AG04450 (cell line): ENCODE measurements at regions of chr14 and their contacts with region 1.

Region 1: DNA sequence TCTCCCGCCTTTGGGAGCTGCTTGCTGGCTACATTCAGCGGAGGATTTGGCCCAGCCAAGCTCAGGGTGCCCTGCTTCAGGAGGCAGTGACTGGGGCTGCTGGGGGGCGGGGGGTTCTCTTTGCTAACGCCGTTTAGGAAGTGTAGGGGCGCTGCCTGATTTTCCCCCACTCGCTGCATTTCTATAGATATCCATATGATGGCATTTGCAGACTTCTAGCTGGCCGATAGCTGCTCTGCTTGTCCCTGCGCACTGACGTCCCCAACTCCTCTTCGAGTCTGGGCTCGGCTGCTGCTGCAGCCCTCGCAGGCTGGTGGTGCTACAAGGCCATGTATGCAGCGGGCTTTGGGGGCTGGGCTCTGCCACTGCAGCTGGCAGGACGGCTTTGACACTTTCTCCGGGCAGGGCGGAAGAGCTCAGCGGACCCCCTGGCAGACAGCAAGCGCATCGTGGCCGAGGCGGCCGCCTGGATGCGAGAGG is 3.1 kb downstream of the LRFN5 start:
- DNase-seq: no peak
- H3K4me3 ChIP-seq: peak overlapping the region; percentile 79
- H3K27ac ChIP-seq: no peak overlapping the region
- H3K27me3 ChIP-seq: peaks cover 16% of the 10 kb centered on the region
- CTCF ChIP-seq: peak; percentile 45

Region 2: DNA sequence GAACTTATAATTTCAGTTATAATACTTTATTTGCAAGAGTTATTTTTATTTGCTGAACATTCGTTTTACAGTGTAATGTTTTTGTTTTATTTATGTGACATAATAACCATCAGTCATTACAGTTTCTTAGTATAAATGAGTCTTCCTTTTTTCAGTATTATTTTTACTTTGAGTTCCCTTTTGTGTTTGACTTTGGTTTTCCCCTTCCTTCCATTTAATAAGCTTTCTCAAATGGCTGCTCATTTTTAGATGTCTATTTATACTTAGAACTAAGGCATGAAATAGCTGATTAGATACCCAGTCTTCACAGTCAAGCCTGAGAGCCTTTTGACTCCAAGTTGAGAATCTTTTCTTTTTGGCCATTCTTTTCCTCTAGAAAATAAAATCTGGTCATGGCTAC is 401.5 kb after region 1 on chr14:
- CTCF ChIA-PET with region 1: interaction called, 11 read pairs
- POLR2A ChIA-PET with region 1: no interaction called
- DNase-seq: no peak
- H3K4me3 ChIP-seq: no peak overlapping the region
- H3K27ac ChIP-seq: no peak overlapping the region
- H3K27me3 ChIP-seq: no peaks in the 10 kb centered on the region
- CTCF ChIP-seq: no peak

Region 3: DNA sequence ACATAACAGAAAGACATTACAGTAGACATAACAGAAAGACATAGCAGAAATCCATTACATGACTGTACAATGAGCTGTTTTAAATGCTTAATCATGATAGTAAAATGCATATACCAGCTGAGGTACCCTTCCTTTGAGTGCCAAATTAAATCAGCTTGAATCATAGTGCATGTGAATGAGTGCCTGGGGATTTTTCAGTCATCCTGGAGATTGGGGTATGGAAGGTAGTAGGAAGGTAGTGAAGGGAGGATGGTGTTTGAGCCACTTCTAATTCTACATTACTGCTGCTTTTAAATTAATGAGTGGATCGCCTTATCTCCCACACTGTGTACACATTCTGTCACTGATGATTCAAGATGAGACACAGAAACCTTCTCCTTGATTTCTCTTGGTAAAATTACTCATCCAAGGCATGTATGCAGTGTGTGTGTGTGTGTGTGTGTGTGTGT is 531.1 kb after region 1 on chr14:
- CTCF ChIA-PET with region 1: interaction called, 14 read pairs
- POLR2A ChIA-PET with region 1: no interaction called
- DNase-seq: peak; percentile 33
- H3K4me3 ChIP-seq: no peak overlapping the region
- H3K27ac ChIP-seq: no peak overlapping the region
- H3K27me3 ChIP-seq: no peaks in the 10 kb centered on the region
- CTCF ChIP-seq: no peak